H1 (cell line): ENCODE measurements at regions of chr2 and their contacts with region 1.

Region 1: GRCh38 chr2:69375494-69376353 is 11.3 kb downstream of the GFPT1 start:
- DNase-seq: no peak
- H3K4me3 ChIP-seq: no peak overlapping the region
- H3K27ac ChIP-seq: no peak overlapping the region
- H3K4me1 ChIP-seq: no peaks in the 10 kb centered on the region
- H3K27me3 ChIP-seq: no peaks in the 10 kb centered on the region
- CTCF ChIP-seq: peak in 2 of 3 experiments; percentile 57 to 66; a peak in 3 of 4 replicates
- EP300 ChIP-seq: no peak
- POLR2A ChIP-seq: no peak
- RAD21 ChIP-seq: peak; percentile 69 to 73

Region 2: GRCh38 chr2:69225933-69226332 is 149.8 kb before region 1 on chr2:
- CTCF ChIA-PET with region 1: no interaction called
- POLR2A ChIA-PET with region 1: no interaction called
- DNase-seq: no peak
- H3K4me3 ChIP-seq: no peak overlapping the region
- H3K27ac ChIP-seq: no peak overlapping the region
- H3K4me1 ChIP-seq: no peaks in the 10 kb centered on the region; a peak in 1 of 7 replicates
- H3K27me3 ChIP-seq: no peaks in the 10 kb centered on the region
- CTCF ChIP-seq: no peak
- EP300 ChIP-seq: no peak
- POLR2A ChIP-seq: no peak
- RAD21 ChIP-seq: no peak

Region 3: GRCh38 chr2:69356471-69356870 is 19.3 kb before region 1 on chr2:
- CTCF ChIA-PET with region 1: interaction called, 10 read pairs
- POLR2A ChIA-PET with region 1: no interaction called
- DNase-seq: no peak
- H3K4me3 ChIP-seq: no peak overlapping the region
- H3K27ac ChIP-seq: no peak overlapping the region
- H3K4me1 ChIP-seq: peaks cover 0 to 6% (median 2%) of the 10 kb centered on the region in 4 experiments; a peak in 2 of 7 replicates
- H3K27me3 ChIP-seq: no peaks in the 10 kb centered on the region
- CTCF ChIP-seq: no peak
- EP300 ChIP-seq: no peak
- POLR2A ChIP-seq: no peak
- RAD21 ChIP-seq: no peak

Region 4: DNA sequence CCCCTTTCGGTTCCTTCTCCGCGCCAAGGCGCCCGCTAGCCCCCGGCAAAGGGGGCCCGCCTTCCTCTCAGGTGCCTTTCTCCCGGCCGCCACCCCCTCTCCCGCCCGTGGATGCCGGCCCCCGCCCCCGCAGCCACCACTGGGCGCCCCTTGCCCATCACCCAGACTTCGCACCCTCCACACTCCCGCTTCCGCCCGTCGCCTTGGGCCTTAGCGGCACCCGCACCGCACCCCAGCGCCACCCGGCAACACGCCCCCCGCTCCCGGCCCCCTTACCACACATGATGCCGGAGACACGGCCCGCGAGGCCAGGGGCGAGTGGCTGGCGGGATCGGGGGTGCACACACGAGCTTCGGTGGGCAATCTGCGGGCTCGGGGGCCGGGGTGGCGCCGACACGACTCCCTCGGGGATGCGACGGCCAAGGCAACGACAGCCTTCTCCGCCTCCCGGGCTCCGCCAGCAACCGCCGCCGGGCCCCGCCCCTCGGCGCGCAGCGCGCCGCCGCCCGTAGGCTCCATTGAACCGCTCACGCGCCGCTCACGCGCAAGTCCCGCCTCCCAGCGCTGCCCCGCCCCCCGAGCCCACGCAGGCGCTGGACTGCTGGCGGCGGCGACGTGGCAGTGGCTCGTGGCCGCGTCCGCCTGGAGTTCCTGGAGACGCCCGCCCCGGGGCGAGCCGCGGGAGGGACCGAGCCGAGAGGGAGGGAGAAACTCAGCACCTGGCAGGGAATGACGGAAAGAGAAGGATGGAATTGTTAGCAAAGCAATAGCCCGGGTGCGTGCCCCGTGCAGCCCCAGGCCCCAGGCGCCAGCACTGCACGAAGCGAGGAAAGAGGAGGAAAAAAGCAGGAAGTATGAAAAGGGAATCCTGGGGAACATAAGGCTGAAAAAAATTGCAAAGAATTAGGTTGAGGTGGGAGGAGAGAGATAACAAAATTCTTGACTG is 11.3 kb after region 1 on chr2 and contains the start of gene GFPT1:
- CTCF ChIA-PET with region 1: interaction called, 24 read pairs
- POLR2A ChIA-PET with region 1: interaction called, 7 read pairs
- DNase-seq: peak; percentile 64 to 93
- H3K4me3 ChIP-seq: peak within 1 kb of the TSS; percentile 65 to 77 (median 70)
- H3K27ac ChIP-seq: no peak within 1 kb of the TSS
- H3K4me1 ChIP-seq: peaks cover 0 to 5% (median 0%) of the 10 kb centered on the region in 4 experiments; a peak in 3 of 7 replicates
- H3K27me3 ChIP-seq: no peaks in the 10 kb centered on the region
- CTCF ChIP-seq: no peak
- EP300 ChIP-seq: no peak
- POLR2A ChIP-seq: peak in 1 of 2 experiments; percentile 69; a peak in 2 of 3 replicates
- RAD21 ChIP-seq: no peak
- total RNA-seq, gene GFPT1: 76.2 and 86.8 TPM in 2 replicates